Prostate gland (tissue), 2 donors: ENCODE measurements at regions of chr19 and their contacts with region 1.

Region 1: GRCh38 chr19:54023191-54023590 is 31.8 kb downstream of the CACNG6 start:
- DNase-seq: no peak
- H3K4me3 ChIP-seq: no peak overlapping the region
- H3K27ac ChIP-seq: no peak overlapping the region
- H3K4me1 ChIP-seq: no peaks in the 10 kb centered on the region
- H3K27me3 ChIP-seq: no peaks in the 10 kb centered on the region
- CTCF ChIP-seq: no peak
- POLR2A ChIP-seq: no peak

Region 2: DNA sequence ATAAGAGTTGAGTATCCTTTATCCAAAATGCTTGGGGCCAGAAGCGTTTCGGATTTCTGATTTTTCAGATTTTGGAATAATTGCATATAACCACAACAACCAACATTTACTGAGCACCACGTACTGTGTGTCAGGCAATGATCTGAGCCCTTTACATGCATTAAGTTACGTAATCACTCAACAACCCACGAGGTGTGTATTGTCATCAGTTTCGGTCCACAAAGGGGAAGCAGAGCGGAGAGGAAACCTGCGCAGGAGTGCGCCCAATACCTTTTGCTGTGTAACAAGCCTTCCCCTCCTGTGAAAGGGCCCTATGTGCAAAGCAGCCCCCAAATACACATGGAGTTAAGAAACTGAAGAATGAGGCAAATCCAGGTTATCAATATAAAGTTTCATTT is 178.3 kb before region 1 on chr19:
- intact Hi-C with region 1: loop called (anchors 2 kb)
- DNase-seq: no peak
- H3K4me3 ChIP-seq: no peak overlapping the region
- H3K27ac ChIP-seq: no peak overlapping the region
- H3K4me1 ChIP-seq: no peaks in the 10 kb centered on the region
- H3K27me3 ChIP-seq: no peaks in the 10 kb centered on the region
- CTCF ChIP-seq: no peak
- POLR2A ChIP-seq: no peak

Region 3: DNA sequence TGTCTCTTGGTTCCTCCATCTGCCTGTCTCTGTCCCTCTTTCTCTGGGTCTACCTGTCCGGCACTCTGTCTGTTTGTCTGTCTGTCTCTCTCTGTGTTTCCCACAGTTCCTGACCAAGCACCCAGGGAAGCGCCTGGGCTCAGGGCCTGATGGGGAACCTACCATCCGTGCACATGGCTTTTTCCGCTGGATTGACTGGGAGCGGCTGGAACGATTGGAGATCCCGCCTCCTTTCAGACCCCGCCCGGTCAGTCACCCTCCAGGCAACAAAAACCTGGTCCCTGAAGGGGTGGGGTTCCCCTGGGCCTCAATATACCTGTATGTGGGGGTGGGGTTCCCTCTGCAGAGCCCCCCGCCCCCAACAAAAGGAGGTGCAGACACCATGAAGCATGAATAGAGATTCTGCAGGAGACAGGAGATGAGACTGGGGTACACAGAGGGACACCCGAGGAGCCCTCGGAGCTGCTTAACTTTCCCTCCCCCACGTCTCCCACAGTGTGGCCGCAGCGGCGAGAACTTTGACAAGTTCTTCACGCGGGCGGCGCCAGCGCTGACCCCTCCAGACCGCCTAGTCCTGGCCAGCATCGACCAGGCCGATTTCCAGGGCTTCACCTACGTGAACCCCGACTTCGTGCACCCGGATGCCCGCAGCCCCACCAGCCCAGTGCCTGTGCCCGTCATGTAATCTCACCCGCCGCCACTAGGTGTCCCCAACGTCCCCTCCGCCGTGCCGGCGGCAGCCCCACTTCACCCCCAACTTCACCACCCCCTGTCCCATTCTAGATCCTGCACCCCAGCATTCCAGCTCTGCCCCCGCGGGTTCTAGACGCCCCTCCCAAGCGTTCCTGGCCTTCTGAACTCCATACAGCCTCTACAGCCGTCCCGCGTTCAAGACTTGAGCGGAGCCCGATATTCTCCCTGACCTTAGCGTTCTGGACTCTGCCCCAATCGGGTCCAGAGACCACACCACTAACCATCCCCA is 116.7 kb before region 1 on chr19:
- intact Hi-C with region 1: loop called (anchors 5 kb)
- DNase-seq: no peak
- H3K4me3 ChIP-seq: no peak overlapping the region
- H3K27ac ChIP-seq: no peak overlapping the region
- H3K4me1 ChIP-seq: peaks cover 2% of the 10 kb centered on the region
- H3K27me3 ChIP-seq: peaks cover 33% of the 10 kb centered on the region
- CTCF ChIP-seq: peak; percentile 44 to 72 (median 57)
- POLR2A ChIP-seq: no peak

Region 4: GRCh38 chr19:54159352-54160181 is 136.4 kb after region 1 on chr19 and contains the start of gene LENG1:
- intact Hi-C with region 1: no loop called
- DNase-seq: peak; percentile 100
- H3K4me3 ChIP-seq: peak within 1 kb of the TSS; percentile 71 to 89
- H3K27ac ChIP-seq: peak within 1 kb of the TSS; percentile 88 to 95
- H3K4me1 ChIP-seq: peaks cover 26% of the 10 kb centered on the region
- H3K27me3 ChIP-seq: no peaks in the 10 kb centered on the region
- CTCF ChIP-seq: peak; percentile 3 to 75 (median 56)
- POLR2A ChIP-seq: peak; percentile 55
- total RNA-seq, gene LENG1: 7.6 to 14.7 TPM